Psoas muscle (tissue), 8 donors: ENCODE measurements at regions of chr1 and their contacts with region 1.

Region 1: GRCh38 chr1:21344750-21345443 is 54.6 kb upstream of the ECE1 start:
- DNase-seq: peak in 1 of 2 donors; percentile 67
- ATAC-seq: no peak
- H3K4me3 ChIP-seq: peak overlapping the region; percentile 79
- H3K27ac ChIP-seq: peak overlapping the region; percentile 75
- H3K4me1 ChIP-seq: peaks cover 6% of the 10 kb centered on the region
- H3K27me3 ChIP-seq: no peaks in the 10 kb centered on the region
- CTCF ChIP-seq: no peak

Region 2: DNA sequence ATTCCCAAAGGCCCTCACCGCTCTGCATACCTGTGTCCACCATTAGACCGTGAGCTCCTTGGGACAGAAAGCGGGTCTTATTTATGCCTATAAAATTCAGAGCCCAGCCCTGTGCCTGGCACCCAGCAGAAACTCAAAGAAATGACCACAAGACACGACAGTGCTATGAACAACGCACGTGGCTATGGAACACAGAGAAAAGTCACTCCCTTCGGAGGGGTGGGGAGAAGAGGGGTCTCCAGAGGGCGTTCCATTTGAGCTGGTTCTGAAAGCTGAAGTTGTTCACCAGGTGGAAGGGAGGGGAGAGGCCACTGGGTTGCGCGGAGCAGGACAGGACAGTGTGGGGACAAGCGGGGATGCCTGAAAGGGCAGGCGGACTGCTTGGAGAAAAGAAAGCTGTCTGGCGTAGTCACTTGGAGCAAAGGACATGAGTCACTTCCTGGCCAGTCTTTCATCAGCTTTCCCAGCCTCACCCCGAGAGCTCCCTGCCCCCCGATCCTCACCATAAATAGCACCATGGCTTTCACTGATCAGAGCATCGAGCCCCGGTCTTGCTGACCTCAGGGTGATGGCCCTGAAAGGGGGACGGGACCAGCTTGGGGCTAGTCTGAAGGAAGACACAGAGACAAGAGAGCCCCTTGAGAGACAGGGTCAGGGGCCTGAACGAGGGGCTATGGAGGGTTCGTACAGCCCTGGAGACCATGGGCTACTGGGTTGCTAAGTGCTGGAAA is 83.2 kb before region 1 on chr1:
- intact Hi-C with region 1: loop called in 1 of 2 experiments (anchors 5 kb)
- DNase-seq: peak; percentile 72 to 81
- ATAC-seq: peak; percentile 67 to 82 (median 78)
- H3K4me3 ChIP-seq: peak overlapping the region; percentile 15
- H3K27ac ChIP-seq: peak overlapping the region; percentile 81
- H3K4me1 ChIP-seq: peaks cover 21% of the 10 kb centered on the region
- H3K27me3 ChIP-seq: peaks cover 0 to 4% (median 0%) of the 10 kb centered on the region in 3 donors
- CTCF ChIP-seq: no peak